Activated CD4-positive, alpha-beta memory T cell treated with anti-CD3 and anti-CD28 coated beads for 36 hours (primary cell): ENCODE measurements at regions of chr5 and their contacts with region 1.

Region 1: DNA sequence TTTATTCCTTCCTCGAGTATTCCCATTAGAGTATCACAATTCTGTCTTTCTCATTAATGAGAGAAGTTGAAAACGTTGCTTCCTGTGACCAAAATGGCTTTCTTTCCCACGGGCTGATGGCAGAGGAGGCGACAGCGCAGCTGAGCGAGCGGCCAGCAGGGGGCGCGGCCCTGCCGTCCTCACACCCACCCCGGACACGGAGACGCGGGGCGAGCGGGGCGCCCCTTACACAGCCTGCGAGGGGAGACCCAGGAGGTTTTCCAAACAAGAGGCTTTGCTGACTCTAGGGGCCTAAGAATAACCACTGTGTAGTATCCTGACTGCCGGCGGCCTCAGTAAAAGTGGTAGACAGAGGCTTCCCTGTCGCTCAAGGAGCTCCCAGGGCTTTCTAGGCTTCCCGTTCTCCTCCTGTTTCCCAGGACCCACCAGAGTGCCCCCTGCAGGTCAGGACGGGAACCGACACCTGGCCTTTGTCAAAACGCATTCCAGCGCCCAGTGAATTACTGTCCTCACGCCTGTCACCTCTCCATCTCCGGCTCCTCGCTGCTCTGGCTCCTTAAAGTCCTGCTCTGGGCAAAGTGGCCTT is 27.3 kb upstream of the FGF1 start:
- DNase-seq: peak; percentile 89
- H3K4me3 Mint-ChIP-seq: peak overlapping the region; percentile 67
- H3K27ac Mint-ChIP-seq: no peak overlapping the region
- H3K4me1 Mint-ChIP-seq: peaks cover 7% of the 10 kb centered on the region
- H3K27me3 Mint-ChIP-seq: peaks cover 2% of the 10 kb centered on the region

Region 2: DNA sequence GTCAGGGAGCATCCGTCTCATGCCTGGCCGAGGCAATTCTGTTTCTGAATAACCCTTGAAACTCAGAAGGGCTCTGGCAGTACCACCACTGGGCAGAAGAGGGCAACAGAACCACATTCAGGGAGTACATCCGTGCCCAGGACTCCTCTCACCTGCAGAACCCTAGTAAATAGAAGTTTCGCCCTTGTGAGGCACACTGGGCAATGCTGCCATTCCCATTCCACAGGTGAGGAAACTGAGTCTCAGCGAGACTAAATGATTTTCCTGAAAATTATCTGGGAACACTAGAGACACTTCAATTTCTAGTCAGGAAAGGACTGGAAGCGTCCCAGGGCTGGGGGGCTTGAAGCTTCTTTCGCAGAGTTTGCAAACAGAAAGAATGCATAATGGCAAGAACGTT is 102.1 kb before region 1 on chr5:
- CTCF ChIA-PET with region 1: interaction called, 13 read pairs
- POLR2A ChIA-PET with region 1: no interaction called
- intact Hi-C with region 1: loop called (anchors 5 kb)
- DNase-seq: peak; percentile 85
- H3K4me3 Mint-ChIP-seq: no peak overlapping the region
- H3K27ac Mint-ChIP-seq: no peak overlapping the region
- H3K4me1 Mint-ChIP-seq: no peaks in the 10 kb centered on the region
- H3K27me3 Mint-ChIP-seq: peaks cover 15% of the 10 kb centered on the region

Region 3: DNA sequence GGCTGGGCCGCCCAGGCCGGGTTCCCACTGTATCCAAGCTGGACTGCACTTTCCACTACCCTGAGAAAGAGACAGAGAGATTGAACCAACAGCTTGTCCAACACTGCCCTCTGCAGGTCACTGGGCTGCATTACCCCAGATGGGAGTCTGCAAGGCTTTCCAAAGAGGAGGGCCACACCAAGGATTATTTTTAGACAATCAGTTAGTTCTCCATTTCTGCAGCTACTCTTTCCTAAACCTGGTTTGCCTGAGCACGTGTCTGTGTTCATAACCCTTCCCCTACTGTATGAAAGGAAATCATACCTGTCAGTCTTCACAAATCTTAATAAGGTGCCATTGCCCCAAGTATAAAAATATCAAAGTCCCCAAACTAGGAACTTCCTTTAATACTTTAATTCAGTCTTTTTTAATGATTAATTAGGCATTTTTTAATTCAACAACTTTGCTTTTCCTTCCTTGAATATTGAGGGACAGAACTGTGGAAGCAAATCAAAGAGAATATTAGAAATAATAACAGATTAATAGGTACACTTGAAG is 14.0 kb before region 1 on chr5:
- CTCF ChIA-PET with region 1: interaction called, 32 read pairs
- POLR2A ChIA-PET with region 1: no interaction called
- intact Hi-C with region 1: no loop called
- DNase-seq: peak; percentile 86
- H3K4me3 Mint-ChIP-seq: no peak overlapping the region
- H3K27ac Mint-ChIP-seq: no peak overlapping the region
- H3K4me1 Mint-ChIP-seq: no peaks in the 10 kb centered on the region
- H3K27me3 Mint-ChIP-seq: peaks cover 6% of the 10 kb centered on the region

Region 4: GRCh38 chr5:142748568-142749249 is 35.5 kb after region 1 on chr5:
- CTCF ChIA-PET with region 1: interaction called, 41 read pairs
- POLR2A ChIA-PET with region 1: no interaction called
- intact Hi-C with region 1: no loop called
- DNase-seq: peak; percentile 72
- H3K4me3 Mint-ChIP-seq: no peak overlapping the region
- H3K27ac Mint-ChIP-seq: peak overlapping the region; percentile 57
- H3K4me1 Mint-ChIP-seq: peaks cover 12% of the 10 kb centered on the region
- H3K27me3 Mint-ChIP-seq: peaks cover 2% of the 10 kb centered on the region

Region 5: DNA sequence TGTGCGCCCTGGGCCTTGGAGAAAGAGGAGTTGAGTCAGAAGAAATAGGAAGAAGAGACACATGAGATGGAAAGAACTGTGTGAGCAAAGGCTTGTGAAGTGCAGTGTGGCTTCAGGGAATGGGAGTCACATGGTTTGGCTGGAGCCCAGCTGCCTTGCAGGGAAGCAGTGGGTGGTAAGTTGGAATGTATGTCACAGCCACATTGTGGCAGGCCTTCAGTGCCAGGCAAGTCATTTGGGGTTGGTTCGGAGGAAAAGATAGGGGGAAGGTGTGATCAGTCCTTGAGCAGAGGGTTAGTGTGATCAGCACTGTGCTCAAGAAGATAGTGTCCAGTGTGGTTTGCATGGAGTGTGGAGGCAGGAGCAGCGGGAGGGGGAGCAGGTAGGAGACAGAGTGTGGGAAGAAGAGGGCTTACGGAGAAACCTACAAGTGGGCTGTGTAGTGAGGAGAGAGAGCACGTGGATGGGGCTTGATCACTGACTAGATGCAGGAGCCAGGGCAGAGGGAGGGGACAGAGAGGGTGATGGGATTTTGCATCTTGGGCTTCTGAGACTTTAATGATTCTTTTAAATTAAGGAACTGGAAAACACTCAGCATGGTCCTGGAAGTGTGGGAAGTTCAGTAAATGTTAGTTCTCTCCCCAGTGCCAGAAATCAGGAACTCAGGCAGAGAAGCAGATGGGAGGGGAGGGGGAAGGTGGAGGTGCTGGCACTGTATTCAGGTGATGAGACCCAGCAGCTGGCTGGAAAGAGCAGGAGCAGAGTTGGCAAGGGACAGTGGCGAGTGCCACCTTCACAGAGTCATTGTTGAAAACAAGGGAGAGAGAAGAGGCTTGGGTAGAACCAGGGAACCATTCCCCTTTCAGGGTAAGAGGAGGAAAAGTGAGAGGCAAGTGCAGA is 103.6 kb after region 1 on chr5:
- CTCF ChIA-PET with region 1: interaction called, 11 read pairs
- POLR2A ChIA-PET with region 1: no interaction called
- intact Hi-C with region 1: no loop called
- DNase-seq: peak; percentile 53
- H3K4me3 Mint-ChIP-seq: no peak overlapping the region
- H3K27ac Mint-ChIP-seq: no peak overlapping the region
- H3K4me1 Mint-ChIP-seq: peaks cover 39% of the 10 kb centered on the region
- H3K27me3 Mint-ChIP-seq: no peaks in the 10 kb centered on the region

Region 6: GRCh38 chr5:142888469-142889085 is 175.4 kb after region 1 on chr5:
- CTCF ChIA-PET with region 1: interaction called, 246 read pairs
- POLR2A ChIA-PET with region 1: no interaction called
- intact Hi-C with region 1: loop called (anchors 1 kb)
- DNase-seq: no peak
- H3K4me3 Mint-ChIP-seq: no peak overlapping the region
- H3K27ac Mint-ChIP-seq: no peak overlapping the region
- H3K4me1 Mint-ChIP-seq: no peaks in the 10 kb centered on the region
- H3K27me3 Mint-ChIP-seq: no peaks in the 10 kb centered on the region